ENCODE measurements at regions of chr19 and their contacts with region 1.

Region 1: GRCh38 chr19:37906869-37907734 is at the start of gene SIPA1L3:
- DNase-seq: peak; percentile 94
- H3K4me3 ChIP-seq: peak within 1 kb of the TSS; percentile 77 to 97
- H3K27ac ChIP-seq: peak within 1 kb of the TSS; percentile 78 to 94
- H3K4me1 ChIP-seq: peaks cover 4 to 16% of the 10 kb centered on the region in 2 experiments; a peak in 1 of 4 replicates
- H3K27me3 ChIP-seq: no peaks in the 10 kb centered on the region
- CTCF ChIP-seq: no peak
- EP300 ChIP-seq: no peak
- RAD21 ChIP-seq: no peak
- polyA plus RNA-seq, gene SIPA1L3: 6.7 and 11.6 TPM in 2 replicates

Region 2: DNA sequence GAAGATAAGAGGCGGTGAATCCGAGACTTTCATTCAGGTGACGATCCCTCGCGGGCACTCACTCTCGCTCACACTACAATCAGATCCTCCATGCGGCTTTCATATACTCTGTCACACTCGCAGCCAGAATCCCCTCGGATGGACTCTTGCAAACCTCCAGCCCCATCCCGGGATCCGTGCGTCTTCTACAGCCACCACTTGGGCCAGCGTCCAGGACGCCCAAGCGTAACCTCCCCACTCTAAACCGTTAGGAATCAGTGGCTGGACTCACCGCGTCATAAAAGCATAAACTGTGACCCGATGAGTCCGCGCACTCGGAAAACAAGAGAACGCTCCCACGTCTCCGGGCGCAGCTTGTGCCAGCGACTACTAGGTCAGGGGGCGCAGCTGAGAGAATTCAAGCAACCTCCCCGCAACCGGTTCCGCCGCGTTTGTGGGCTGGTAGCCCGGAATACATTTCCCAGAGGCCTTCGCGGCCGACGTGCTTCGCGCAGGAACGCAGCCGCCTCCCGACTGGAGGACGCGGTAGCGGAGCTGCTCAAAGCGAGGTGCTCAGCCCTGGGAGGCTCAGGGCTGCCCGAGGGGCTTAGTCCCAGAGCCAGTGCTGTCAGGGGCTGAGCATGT is 215.1 kb before region 1 on chr19:
- CTCF ChIA-PET with region 1: no interaction called
- POLR2A ChIA-PET with region 1: no interaction called
- DNase-seq: peak; percentile 89
- H3K4me3 ChIP-seq: peak overlapping the region; percentile 61 to 66
- H3K27ac ChIP-seq: peak overlapping the region; percentile 37 to 87
- H3K4me1 ChIP-seq: no peaks in the 10 kb centered on the region
- H3K27me3 ChIP-seq: no peaks in the 10 kb centered on the region
- CTCF ChIP-seq: peak; percentile 9; the same call in 1 of the 2 replicates
- EP300 ChIP-seq: no peak
- RAD21 ChIP-seq: no peak

Region 3: DNA sequence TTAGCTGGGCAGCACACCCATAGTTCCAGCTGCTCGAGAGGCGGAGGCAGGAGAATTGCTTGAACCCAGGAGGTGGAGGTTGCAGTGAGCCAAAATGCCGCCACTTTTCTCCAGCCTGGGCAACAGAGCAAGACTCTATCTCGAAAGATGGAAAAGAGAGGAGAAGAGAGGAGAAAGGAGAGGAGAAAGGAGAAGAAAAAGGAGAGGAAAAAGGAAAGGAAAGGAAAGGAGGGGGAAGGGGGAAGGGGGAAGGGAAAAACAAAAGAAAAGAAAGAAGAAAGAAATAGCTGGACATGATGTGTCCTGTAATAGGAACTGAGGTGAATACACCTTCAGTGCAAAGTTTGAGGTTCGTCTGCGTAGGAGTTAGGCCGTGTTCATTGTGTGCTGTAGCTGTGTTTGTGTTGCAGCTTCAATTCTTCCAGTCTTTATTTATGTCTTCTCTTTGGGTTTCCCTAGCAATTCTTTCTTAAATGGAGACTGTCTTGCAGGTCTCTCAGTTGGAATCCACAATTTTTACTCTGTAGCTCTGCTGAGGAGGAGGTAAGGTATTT is 201.0 kb before region 1 on chr19:
- CTCF ChIA-PET with region 1: no interaction called
- POLR2A ChIA-PET with region 1: no interaction called
- DNase-seq: no peak
- H3K4me3 ChIP-seq: no peak overlapping the region
- H3K27ac ChIP-seq: no peak overlapping the region
- H3K4me1 ChIP-seq: no peaks in the 10 kb centered on the region
- H3K27me3 ChIP-seq: no peaks in the 10 kb centered on the region
- CTCF ChIP-seq: no peak
- EP300 ChIP-seq: no peak
- RAD21 ChIP-seq: no peak

Region 4: DNA sequence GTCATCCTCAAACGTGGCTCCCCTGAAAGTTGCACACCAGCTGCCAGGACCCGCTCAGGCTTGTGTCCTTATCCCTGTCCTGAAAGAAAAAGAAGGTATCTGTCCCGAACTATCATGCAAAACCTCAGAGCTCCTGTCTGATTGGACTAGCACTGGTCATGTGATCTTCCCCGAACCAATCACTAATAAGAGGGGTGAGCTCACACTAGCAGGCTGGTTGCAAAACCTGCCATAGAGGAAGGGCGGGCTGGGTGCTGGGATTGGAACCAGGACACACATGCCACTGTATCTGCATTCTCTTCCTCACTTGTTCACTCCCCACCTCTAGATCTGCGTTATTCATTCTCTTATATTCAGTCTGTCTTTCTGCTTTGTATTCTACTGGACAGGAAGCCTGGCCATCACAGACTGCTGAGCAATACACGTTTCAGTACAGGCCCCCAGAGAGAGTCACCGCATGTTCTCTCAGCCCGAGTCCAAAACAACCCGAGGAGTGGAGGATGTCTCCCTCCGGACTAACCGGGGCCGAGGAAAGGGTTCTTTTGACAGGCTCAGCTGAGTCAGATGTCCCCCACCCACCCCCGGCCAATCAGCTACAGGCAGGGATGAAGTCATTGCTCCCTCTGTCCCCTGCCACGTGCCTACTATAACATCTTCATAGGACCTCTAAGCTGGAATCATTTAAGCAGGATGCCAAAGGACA is 97.6 kb after region 1 on chr19:
- CTCF ChIA-PET with region 1: interaction called, 6 read pairs
- POLR2A ChIA-PET with region 1: interaction called, 50 read pairs
- DNase-seq: peak; percentile 89
- H3K4me3 ChIP-seq: peak overlapping the region; percentile 46 to 57
- H3K27ac ChIP-seq: peak overlapping the region; percentile 98 to 100
- H3K4me1 ChIP-seq: peaks cover 25 to 32% of the 10 kb centered on the region in 2 experiments
- H3K27me3 ChIP-seq: no peaks in the 10 kb centered on the region
- CTCF ChIP-seq: no peak
- EP300 ChIP-seq: no peak
- RAD21 ChIP-seq: no peak

Region 5: GRCh38 chr19:38089440-38089839 is 182.3 kb after region 1 on chr19:
- CTCF ChIA-PET with region 1: interaction called, 29 read pairs
- POLR2A ChIA-PET with region 1: interaction called, 8 read pairs
- DNase-seq: no peak
- H3K4me3 ChIP-seq: no peak overlapping the region
- H3K27ac ChIP-seq: no peak overlapping the region
- H3K4me1 ChIP-seq: peaks cover 0 to 24% of the 10 kb centered on the region in 2 experiments; a peak in 1 of 4 replicates
- H3K27me3 ChIP-seq: no peaks in the 10 kb centered on the region
- CTCF ChIP-seq: no peak
- EP300 ChIP-seq: no peak
- RAD21 ChIP-seq: no peak

Region 6: DNA sequence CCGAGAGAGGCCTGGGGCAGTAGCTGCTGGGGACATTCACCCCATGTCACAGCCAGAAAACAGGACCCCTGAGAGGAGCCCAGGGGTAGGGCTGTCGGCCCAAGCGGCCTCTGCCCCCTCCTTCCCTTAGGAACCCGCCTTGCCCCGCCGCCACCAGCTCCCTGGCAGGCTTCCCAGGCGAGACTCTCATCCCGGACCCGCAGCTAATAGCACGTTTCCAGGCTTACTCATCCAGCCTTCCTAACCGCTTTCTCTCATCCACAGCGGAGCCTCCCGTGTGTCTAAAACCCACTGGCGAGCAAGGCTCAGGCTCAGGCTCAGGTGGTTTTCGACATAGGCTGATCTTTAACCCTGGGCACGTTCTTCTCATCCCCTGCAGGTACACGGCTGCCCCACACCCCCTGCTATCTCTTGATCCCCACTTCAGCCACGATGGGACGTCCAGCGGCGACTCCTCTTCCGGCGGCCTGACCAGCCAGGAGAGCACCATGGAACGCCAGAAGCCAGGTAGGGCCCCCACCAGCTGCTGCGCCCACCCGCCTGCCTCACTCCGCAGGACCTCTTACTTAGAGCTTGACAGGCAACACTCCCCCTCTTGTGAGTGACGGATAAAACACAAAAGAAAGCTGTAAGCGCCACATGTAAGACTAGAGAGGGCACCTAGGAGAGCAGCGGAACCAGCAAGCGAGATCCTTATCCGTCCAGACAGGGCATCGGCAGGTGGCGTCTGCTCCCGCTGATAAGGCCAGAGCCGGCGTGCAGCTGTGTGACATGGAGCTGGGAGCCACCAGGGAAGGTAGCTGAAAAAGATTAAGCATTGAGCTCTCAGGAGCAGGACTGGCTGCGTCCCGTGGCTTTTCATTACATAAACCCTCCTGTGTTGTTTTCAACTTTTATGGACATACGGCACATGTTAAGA is 245.6 kb after region 1 on chr19:
- CTCF ChIA-PET with region 1: interaction called, 18 read pairs
- POLR2A ChIA-PET with region 1: interaction called, 3 read pairs
- DNase-seq: peak; percentile 78
- H3K4me3 ChIP-seq: no peak overlapping the region
- H3K27ac ChIP-seq: peak overlapping the region; percentile 45 to 90
- H3K4me1 ChIP-seq: peaks cover 13 to 19% of the 10 kb centered on the region in 2 experiments; a peak in 2 of 4 replicates
- H3K27me3 ChIP-seq: no peaks in the 10 kb centered on the region
- CTCF ChIP-seq: no peak
- EP300 ChIP-seq: peak; percentile 20 to 61; a peak in 3 of 4 replicates
- RAD21 ChIP-seq: peak; percentile 40; the same call in 1 of the 2 replicates

Region 7: DNA sequence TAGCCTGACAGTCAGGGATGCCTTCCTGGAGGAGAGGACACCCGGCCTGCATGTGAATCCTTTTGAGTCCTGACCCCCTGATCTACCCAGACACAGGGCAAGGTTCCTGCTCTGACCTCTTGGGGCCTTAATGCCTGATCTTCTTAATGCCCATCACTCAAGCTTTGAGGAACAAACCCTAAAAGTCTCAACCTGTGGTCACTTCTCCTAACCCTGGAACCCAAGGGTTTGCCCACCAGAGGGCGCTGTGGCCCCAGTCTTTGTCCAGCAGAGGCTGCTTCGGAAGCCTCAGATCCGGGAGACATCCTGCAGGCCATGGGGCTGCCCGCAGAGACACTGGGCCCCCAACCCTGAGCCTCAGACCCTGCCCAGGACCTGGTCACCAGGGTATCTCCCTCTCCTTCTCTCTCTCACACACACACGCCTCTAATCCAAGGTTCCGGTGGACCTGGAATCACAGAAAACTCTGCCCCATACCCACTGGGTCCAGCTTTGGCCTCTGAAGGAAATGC is 326.7 kb after region 1 on chr19:
- CTCF ChIA-PET with region 1: interaction called, 41 read pairs
- POLR2A ChIA-PET with region 1: interaction called, 3 read pairs
- DNase-seq: peak; percentile 88
- H3K4me3 ChIP-seq: no peak overlapping the region; a peak in 1 of 4 replicates
- H3K27ac ChIP-seq: no peak overlapping the region
- H3K4me1 ChIP-seq: peaks cover 0 to 1% of the 10 kb centered on the region in 2 experiments; a peak in 1 of 4 replicates
- H3K27me3 ChIP-seq: no peaks in the 10 kb centered on the region
- CTCF ChIP-seq: peak; percentile 83
- EP300 ChIP-seq: no peak
- RAD21 ChIP-seq: peak; percentile 84

Region 8: DNA sequence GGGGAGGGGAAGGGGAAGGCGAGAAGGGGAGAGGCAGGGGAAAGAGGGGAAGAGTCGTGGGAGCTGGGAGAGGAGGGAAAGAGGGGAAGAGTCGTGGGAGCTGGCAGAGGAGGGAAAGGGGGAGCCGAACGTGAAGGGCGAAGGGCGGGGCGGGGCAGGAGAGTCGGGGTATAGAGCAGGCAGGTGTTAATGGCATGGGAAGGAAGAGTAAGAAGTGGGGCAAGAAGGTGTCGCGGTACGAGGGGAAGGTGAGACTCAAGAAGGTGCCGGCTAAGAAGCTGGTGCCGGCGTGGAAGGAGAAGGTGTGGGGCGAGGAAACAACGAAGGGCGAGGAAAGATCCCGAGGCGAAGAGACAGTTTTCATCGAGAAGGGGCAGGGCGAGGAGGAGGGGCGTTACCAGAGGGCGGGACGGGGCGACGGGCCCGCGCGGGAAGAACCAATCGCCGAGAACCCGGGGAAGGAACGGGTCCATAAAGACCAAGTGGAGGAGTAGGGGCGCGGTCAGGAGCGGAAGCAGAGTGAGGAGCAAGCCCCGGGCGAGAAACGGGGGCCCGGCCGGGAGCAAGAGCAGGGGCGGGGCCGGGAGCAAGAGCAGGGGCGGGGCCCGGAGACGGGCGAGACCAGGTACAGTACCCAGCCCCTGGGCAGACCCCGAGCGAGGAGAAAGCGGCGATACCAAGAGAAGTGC is 429.0 kb after region 1 on chr19:
- CTCF ChIA-PET with region 1: interaction called, 46 read pairs
- POLR2A ChIA-PET with region 1: no interaction called
- DNase-seq: peak; percentile 92
- H3K4me3 ChIP-seq: peak overlapping the region; percentile 68 to 96
- H3K27ac ChIP-seq: peak overlapping the region; percentile 82 to 86
- H3K4me1 ChIP-seq: peaks cover 0 to 8% of the 10 kb centered on the region in 2 experiments; a peak in 1 of 4 replicates
- H3K27me3 ChIP-seq: no peaks in the 10 kb centered on the region
- CTCF ChIP-seq: no peak
- EP300 ChIP-seq: no peak
- RAD21 ChIP-seq: no peak

Measured in SK-N-SH (cell line).